ENCODE measurements at regions of chr1 and their contacts with region 1.

Region 1: DNA sequence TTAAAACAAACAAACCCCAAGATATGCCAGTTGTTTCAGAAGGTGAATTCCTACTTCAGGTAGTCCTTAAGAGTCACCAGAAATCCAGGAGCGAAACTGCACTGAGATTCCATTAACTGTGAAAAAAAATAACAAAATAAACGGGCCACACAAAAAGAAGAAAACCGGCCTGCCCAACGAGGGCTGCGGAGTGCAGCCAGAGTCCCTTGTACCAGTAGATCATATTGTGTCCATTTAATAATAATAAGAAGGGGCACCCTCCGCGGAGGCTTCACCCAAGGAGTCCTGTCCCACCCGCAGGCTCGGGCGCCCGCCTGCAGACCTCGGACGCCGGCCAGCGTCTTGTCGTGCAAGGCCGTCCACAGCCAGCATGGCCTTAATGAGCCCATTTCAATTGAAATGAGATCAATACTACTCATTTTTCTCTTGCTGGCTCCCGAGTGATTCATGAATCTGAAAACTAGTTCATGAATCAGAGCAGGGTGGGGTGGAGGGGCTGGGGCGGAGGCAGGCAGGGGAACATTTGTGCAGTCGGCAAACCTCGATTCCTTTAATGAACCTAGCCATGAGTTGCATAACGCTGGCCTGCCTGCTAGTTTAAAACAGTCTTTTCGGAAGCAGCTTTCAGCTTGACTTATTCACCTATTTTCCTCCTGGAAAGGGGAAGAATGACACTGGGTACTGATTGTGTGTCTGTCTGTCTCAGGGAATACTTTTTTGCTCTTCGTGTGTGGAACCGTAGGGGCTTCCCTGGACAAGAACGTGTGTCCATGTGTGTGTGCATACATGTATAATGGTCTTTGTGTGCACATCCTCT is 113.1 kb upstream of the IRF2BP2 start:
- DNase-seq: peak; percentile 69
- H3K4me3 ChIP-seq: peak overlapping the region; percentile 23
- CTCF ChIP-seq: no peak

Region 2: GRCh38 chr1:234212764-234213657 is 510.1 kb before region 1 on chr1:
- CTCF ChIA-PET with region 1: no interaction called
- POLR2A ChIA-PET with region 1: no interaction called
- DNase-seq: no peak
- H3K4me3 ChIP-seq: no peak overlapping the region
- CTCF ChIP-seq: peak; percentile 6

Region 3: DNA sequence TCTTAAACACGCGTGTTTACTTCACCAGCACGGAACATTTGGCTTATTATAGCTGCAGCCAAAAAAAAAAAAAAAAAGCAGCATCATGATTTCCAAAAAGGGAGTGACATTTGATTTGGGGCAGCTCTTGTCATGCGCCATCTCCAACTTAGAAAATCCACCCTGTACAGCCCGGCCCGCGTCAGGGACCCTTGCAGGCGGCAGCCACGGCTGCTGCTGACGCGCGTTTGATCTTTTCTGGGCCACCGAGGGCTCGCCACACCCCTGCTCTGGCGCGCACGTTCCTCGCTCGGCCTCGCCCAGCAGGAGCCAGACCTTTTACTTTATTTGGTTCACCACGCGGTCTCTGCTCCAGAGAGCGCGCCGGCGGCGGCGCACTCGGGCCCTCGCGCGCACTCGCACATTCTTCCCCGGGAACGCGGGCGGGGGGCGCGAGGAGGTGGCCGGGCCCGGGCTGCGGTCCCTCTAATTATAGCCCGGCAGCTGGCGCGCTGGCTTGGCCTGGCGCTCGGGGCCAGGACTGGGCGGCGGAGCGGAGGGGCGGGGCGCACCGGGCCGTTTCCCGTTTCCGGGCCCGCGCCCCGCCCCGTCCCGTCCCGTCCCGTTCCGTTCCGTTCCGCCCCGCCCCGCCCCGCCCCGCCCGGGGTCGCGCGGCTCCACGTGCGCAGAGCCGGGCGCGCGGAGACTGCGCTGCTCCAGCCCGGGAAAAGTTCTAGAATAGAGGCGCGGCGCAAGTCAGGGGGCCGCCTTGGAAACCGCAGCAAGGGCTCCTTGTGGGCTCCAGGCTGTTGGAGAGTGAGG is 123.3 kb before region 1 on chr1:
- CTCF ChIA-PET with region 1: interaction called, 5 read pairs
- POLR2A ChIA-PET with region 1: interaction called, 13 read pairs
- DNase-seq: no peak
- H3K4me3 ChIP-seq: peak overlapping the region; percentile 61
- CTCF ChIP-seq: no peak

Region 4: GRCh38 chr1:234699795-234700665 is 23.1 kb before region 1 on chr1:
- CTCF ChIA-PET with region 1: no interaction called
- POLR2A ChIA-PET with region 1: no interaction called
- DNase-seq: no peak
- H3K4me3 ChIP-seq: no peak overlapping the region
- CTCF ChIP-seq: no peak

Region 5: GRCh38 chr1:234737967-234738314 is 14.8 kb after region 1 on chr1:
- CTCF ChIA-PET with region 1: no interaction called
- POLR2A ChIA-PET with region 1: no interaction called
- DNase-seq: no peak
- H3K4me3 ChIP-seq: no peak overlapping the region
- CTCF ChIP-seq: no peak

Region 6: GRCh38 chr1:234925440-234926263 is 202.5 kb after region 1 on chr1:
- CTCF ChIA-PET with region 1: no interaction called
- POLR2A ChIA-PET with region 1: interaction called, 11 read pairs
- DNase-seq: peak; percentile 99
- H3K4me3 ChIP-seq: no peak overlapping the region
- CTCF ChIP-seq: no peak

Region 7: GRCh38 chr1:234963180-234963903 is 240.2 kb after region 1 on chr1:
- CTCF ChIA-PET with region 1: no interaction called
- POLR2A ChIA-PET with region 1: interaction called, 11 read pairs
- DNase-seq: peak; percentile 88
- H3K4me3 ChIP-seq: peak overlapping the region; percentile 6; the same call in 1 of the 2 replicates
- CTCF ChIP-seq: no peak

Measured in AG04449 (cell line).